ENCODE measurements at regions of chr10 and their contacts with region 1.

Region 1: DNA sequence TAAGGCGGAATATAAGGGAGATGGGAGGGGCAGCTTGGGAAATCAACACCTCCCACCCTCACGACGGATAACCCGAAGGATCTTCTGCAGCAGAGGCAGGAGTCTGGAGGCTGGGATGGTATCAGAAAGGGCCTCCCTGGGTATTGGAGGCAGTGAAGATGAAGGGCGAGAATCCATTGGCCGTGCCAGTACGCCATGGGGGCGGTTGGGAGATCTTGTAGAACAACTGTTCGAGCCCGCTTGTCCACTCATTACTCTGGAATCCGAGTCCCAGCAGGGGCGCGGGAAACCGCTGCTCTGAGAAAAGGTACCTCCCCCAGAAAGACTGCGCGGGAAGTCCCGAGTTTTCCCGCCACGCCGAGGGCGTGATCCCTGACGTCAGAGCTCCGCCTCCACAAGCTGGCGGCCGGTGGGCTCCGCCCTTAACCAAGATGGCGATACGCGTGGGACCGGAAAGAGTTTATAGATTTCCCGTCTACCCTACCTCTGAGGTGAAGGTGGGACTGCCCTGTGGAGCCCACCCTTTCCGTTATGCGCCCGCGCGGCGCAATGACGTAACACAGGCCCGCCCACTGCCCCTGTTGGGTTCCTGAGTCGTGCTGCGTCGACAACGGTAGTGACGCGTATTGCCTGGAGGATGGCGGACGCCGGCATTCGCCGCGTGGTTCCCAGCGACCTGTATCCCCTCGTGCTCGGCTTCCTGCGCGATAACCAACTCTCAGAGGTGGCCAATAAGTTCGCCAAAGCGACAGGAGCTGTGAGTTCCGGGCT is at the start of gene NOLC1:
- DNase-seq: peak; percentile 95
- H3K4me3 ChIP-seq: peak within 1 kb of the TSS; percentile 81 to 91
- H3K27ac ChIP-seq: peak within 1 kb of the TSS; percentile 81 to 91
- H3K4me1 ChIP-seq: peaks cover 7 to 15% of the 10 kb centered on the region in 2 experiments; a peak in 2 of 4 replicates
- H3K27me3 ChIP-seq: no peaks in the 10 kb centered on the region
- CTCF ChIP-seq: no peak
- EP300 ChIP-seq: 0 out of 4 replicates have a peak, but pooled peaks of 1 of the 2 experiments have one; percentile 15
- RAD21 ChIP-seq: no peak
- polyA plus RNA-seq, gene NOLC1: 71.8 and 94.6 TPM in 2 replicates

Region 2: DNA sequence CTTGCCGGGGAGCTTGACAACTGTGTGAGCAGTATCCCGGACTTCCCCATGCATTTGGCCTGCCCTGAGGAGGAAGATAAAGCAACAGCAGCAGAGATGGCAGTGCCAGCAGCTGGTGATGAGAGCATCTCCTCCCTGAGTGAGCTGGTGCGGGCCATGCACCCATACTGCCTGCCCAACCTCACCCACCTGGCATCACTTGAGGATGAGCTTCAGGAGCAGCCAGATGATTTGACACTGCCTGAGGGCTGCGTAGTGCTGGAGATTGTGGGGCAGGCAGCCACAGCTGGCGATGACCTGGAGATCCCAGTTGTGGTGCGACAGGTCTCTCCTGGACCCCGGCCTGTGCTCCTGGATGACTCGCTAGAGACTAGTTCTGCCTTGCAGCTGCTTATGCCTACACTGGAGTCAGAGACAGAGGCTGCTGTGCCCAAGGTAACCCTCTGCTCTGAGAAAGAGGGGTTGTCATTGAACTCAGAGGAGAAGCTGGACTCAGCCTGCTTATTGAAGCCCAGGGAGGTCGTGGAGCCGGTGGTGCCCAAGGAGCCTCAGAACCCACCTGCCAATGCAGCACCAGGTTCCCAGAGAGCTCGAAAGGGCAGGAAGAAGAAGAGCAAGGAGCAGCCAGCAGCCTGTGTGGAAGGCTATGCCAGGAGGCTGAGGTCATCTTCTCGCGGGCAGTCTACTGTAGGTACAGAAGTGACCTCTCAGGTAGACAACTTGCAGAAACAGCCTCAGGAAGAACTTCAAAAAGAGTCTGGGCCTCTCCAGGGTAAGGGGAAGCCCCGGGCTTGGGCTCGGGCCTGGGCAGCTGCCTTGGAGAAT is 12.5 kb before region 1 on chr10:
- CTCF ChIA-PET with region 1: interaction called, 3 read pairs
- POLR2A ChIA-PET with region 1: interaction called, 12 read pairs
- DNase-seq: no peak
- H3K4me3 ChIP-seq: no peak overlapping the region
- H3K27ac ChIP-seq: no peak overlapping the region
- H3K4me1 ChIP-seq: peaks cover 7 to 12% of the 10 kb centered on the region in 2 experiments; a peak in 2 of 4 replicates
- H3K27me3 ChIP-seq: no peaks in the 10 kb centered on the region
- CTCF ChIP-seq: no peak
- EP300 ChIP-seq: no peak
- RAD21 ChIP-seq: no peak

Region 3: DNA sequence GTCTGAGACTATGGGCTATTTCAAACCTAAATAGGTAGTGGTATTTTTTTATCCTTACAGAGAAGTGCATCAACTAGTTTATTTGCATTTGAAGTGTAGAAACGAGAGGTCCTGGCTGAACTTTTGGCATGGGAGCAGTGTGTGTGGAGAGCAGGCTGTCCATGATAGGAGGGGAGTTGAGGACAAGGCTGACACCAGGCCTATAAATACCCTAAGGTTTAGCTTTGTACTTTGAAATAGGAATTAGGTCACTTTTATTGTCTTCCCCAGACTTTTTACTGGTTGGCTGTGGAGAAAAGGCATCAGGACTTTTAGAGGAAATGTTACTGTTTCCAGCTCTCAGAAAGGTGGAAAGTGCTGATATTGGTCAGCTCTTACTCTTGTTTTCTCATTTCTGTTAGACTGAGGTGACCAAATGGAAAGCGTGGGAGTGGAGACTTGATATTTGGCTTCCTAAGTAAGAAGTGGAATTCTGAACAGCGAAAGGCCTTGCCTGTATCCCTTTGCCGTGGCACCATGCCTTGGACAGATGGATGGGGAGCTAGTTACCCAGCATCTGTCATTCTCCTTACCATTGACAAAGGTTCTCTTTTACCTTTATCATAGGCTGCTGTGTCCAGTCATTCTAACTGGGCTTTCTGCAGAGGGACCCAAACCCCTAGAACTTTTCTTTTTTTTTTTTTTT is 139.4 kb after region 1 on chr10:
- CTCF ChIA-PET with region 1: no interaction called
- POLR2A ChIA-PET with region 1: no interaction called
- DNase-seq: no peak
- H3K4me3 ChIP-seq: no peak overlapping the region
- H3K27ac ChIP-seq: no peak overlapping the region
- H3K4me1 ChIP-seq: no peaks in the 10 kb centered on the region
- H3K27me3 ChIP-seq: no peaks in the 10 kb centered on the region
- CTCF ChIP-seq: no peak
- EP300 ChIP-seq: no peak
- RAD21 ChIP-seq: no peak